ENCODE measurements at regions of chr18 and their contacts with region 1.

Region 1: DNA sequence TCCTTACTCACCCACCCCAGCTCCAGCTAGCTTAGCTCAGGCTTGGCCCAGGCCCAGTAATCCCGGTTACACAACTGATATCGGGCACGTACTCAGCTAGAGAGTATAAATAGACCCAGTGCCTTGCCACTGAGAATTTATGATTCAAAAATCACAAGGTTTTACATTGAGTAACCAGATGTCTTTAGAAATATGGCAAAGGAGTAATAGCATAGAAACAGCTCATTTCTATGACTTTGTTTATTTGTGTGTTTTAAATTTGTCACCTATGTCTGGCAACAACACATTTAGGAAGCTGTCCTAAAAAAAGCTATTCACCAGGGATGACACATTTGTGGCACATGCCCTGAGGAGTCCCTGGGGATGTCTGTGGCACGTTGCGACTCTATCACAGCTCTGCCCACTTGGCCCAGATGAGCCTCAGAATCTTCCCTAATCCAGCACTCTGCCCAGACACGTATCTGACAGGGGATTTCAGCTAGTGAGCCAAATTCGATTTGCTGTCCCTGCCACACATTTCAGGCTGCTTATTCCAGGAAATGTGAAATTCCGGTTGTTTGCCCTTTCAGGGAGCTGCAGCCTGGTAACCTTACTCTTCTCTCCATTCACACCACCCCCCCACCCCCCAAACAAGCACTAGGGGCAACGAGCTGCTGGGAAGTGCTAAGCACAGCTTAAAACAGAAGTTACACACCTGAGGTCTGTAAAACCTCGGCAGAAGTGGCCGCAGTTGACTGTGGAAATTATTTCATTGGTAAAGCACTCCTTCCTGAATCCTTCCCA is 85.4 kb upstream of the ZCCHC2 start:
- DNase-seq: peak; percentile 95
- H3K4me3 Mint-ChIP-seq: peak overlapping the region; percentile 55
- H3K27ac Mint-ChIP-seq: peak overlapping the region; percentile 93
- H3K4me1 Mint-ChIP-seq: peaks cover 18% of the 10 kb centered on the region
- H3K27me3 Mint-ChIP-seq: no peaks in the 10 kb centered on the region
- CTCF ChIP-seq: no peak

Region 2: GRCh38 chr18:62054929-62055498 is 382.4 kb before region 1 on chr18:
- CTCF ChIA-PET with region 1: no interaction called
- POLR2A ChIA-PET with region 1: no interaction called
- intact Hi-C with region 1: no loop called
- DNase-seq: no peak
- H3K4me3 Mint-ChIP-seq: no peak overlapping the region
- H3K27ac Mint-ChIP-seq: no peak overlapping the region
- H3K4me1 Mint-ChIP-seq: no peaks in the 10 kb centered on the region
- H3K27me3 Mint-ChIP-seq: no peaks in the 10 kb centered on the region
- CTCF ChIP-seq: no peak

Region 3: GRCh38 chr18:62450546-62451406 is 13.3 kb after region 1 on chr18:
- CTCF ChIA-PET with region 1: interaction called, 11 read pairs
- POLR2A ChIA-PET with region 1: interaction called, 61 read pairs
- intact Hi-C with region 1: no loop called
- DNase-seq: peak; percentile 91
- H3K4me3 Mint-ChIP-seq: peak overlapping the region; percentile 30
- H3K27ac Mint-ChIP-seq: peak overlapping the region; percentile 67
- H3K4me1 Mint-ChIP-seq: peaks cover 29% of the 10 kb centered on the region
- H3K27me3 Mint-ChIP-seq: no peaks in the 10 kb centered on the region
- CTCF ChIP-seq: no peak

Region 4: GRCh38 chr18:62505669-62506494 is 68.5 kb after region 1 on chr18:
- CTCF ChIA-PET with region 1: interaction called, 3 read pairs
- POLR2A ChIA-PET with region 1: interaction called, 10 read pairs
- intact Hi-C with region 1: no loop called
- DNase-seq: peak; percentile 30
- H3K4me3 Mint-ChIP-seq: peak overlapping the region; percentile 75
- H3K27ac Mint-ChIP-seq: peak overlapping the region; percentile 77
- H3K4me1 Mint-ChIP-seq: no peaks in the 10 kb centered on the region
- H3K27me3 Mint-ChIP-seq: no peaks in the 10 kb centered on the region
- CTCF ChIP-seq: no peak